Prostate gland (tissue), 2 donors: ENCODE measurements at regions of chr5 and their contacts with region 1.

Region 1: GRCh38 chr5:55151923-55152842 is 7.8 kb upstream of the GPX8 start:
- DNase-seq: peak; percentile 69
- H3K4me3 ChIP-seq: no peak overlapping the region
- H3K27ac ChIP-seq: no peak overlapping the region
- H3K4me1 ChIP-seq: no peaks in the 10 kb centered on the region
- H3K27me3 ChIP-seq: peaks cover 2% of the 10 kb centered on the region
- CTCF ChIP-seq: no peak
- POLR2A ChIP-seq: no peak

Region 2: GRCh38 chr5:54905943-54906537 is 246.1 kb before region 1 on chr5:
- intact Hi-C with region 1: loop called (anchors 5 kb)
- DNase-seq: peak; percentile 61
- H3K4me3 ChIP-seq: no peak overlapping the region
- H3K27ac ChIP-seq: no peak overlapping the region
- H3K4me1 ChIP-seq: no peaks in the 10 kb centered on the region
- H3K27me3 ChIP-seq: no peaks in the 10 kb centered on the region
- CTCF ChIP-seq: peak; percentile 26 to 65 (median 56)
- POLR2A ChIP-seq: no peak